CD14-positive monocyte (primary cell): ENCODE measurements at regions of chr11 and their contacts with region 1.

Region 1: GRCh38 chr11:62324738-62325556 is 12.3 kb upstream of the ASRGL1 start:
- DNase-seq: peak; percentile 74 to 86 (median 84)
- H3K4me3 ChIP-seq: no peak overlapping the region
- H3K4me3 Mint-ChIP-seq: peak overlapping the region in 1 of 2 donors; percentile 47
- H3K27ac ChIP-seq: no peak overlapping the region
- H3K27ac Mint-ChIP-seq: no peak overlapping the region
- H3K4me1 ChIP-seq: peaks cover 22 to 30% of the 10 kb centered on the region in 2 donors
- H3K4me1 Mint-ChIP-seq: peaks cover 28% of the 10 kb centered on the region
- H3K27me3 ChIP-seq: no peaks in the 10 kb centered on the region
- H3K27me3 Mint-ChIP-seq: peaks cover 0 to 5% (median 0%) of the 10 kb centered on the region in 3 donors
- CTCF ChIP-seq: peak; percentile 99

Region 2: DNA sequence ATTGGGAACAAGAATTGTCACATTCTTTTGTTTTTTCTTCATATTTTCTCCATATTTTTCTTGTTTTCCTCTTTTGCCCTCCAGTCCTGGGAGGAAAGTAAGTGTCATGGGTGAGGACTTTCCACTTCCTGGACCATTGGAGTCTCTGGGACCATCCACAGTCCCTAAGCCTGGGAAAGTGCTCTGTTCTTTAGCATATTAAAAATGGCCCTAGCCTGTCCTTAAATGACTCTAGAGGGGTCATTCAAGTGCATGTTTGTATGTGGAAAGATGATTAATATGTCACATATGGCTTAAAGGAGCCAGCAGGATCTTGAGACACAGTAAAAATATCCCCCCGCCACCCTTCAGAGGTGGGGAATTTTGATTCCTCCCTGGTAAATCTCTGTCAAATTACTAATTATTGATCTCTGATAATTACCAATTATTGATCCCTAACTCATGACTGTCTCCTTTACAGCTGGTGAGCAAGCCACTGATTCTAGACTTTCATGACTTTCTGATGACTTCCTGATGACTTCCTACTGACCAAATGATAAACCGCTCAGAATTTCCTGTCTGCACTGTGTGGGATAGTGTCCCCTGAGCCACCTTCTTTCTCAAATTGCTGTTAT is 154.9 kb before region 1 on chr11:
- intact Hi-C with region 1: loop called (anchors 2 to 5 kb)
- DNase-seq: no peak
- H3K4me3 ChIP-seq: no peak overlapping the region
- H3K4me3 Mint-ChIP-seq: no peak overlapping the region
- H3K27ac ChIP-seq: no peak overlapping the region
- H3K27ac Mint-ChIP-seq: no peak overlapping the region
- H3K4me1 ChIP-seq: no peaks in the 10 kb centered on the region
- H3K4me1 Mint-ChIP-seq: peaks cover 4% of the 10 kb centered on the region
- H3K27me3 ChIP-seq: peaks cover 0 to 5% of the 10 kb centered on the region in 2 donors
- H3K27me3 Mint-ChIP-seq: peaks cover 17 to 32% (median 22%) of the 10 kb centered on the region in 3 donors
- CTCF ChIP-seq: no peak

Region 3: DNA sequence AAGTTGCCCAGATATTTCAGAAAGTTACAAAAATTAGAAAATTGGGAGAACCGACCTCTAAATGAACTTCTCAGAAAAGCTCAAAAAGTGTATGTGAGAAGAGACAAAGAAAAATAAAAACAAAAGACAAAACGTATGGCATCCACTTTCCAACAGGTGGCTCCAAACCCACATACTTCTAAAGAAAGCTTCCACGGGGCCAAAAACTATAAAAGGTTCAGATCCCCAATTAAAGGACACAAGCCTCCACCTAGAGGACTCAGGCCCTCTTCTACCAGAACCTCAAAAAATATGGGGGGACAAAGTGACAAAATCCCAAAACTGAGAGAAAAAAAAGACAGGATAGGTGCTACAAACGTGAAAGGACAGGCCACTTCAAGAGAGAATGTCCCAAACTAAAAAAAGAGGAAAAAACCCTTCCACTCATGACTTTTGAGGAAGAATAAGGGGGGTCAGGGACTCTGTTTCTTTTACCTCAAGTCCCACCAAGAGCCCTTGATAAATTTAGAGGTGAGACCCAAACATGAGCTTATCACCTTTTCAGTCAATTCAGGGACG is 107.7 kb before region 1 on chr11:
- intact Hi-C with region 1: loop called (anchors 5 to 10 kb)
- DNase-seq: no peak
- H3K4me3 ChIP-seq: no peak overlapping the region
- H3K4me3 Mint-ChIP-seq: no peak overlapping the region
- H3K27ac ChIP-seq: no peak overlapping the region
- H3K27ac Mint-ChIP-seq: no peak overlapping the region
- H3K4me1 ChIP-seq: no peaks in the 10 kb centered on the region
- H3K4me1 Mint-ChIP-seq: no peaks in the 10 kb centered on the region
- H3K27me3 ChIP-seq: no peaks in the 10 kb centered on the region
- H3K27me3 Mint-ChIP-seq: peaks cover 2 to 6% (median 5%) of the 10 kb centered on the region in 3 donors
- CTCF ChIP-seq: peak; percentile 34